ENCODE measurements at regions of chr22 and their contacts with region 1.

Region 1: GRCh38 chr22:35350539-35351503 is 30.1 kb upstream of the HMOX1 start:
- DNase-seq: peak; percentile 93
- ATAC-seq: peak; percentile 95
- H3K4me3 Mint-ChIP-seq: peak overlapping the region; percentile 70
- H3K27ac Mint-ChIP-seq: no peak overlapping the region
- H3K4me1 Mint-ChIP-seq: peaks cover 21% of the 10 kb centered on the region
- H3K27me3 Mint-ChIP-seq: peaks cover 5% of the 10 kb centered on the region

Region 2: DNA sequence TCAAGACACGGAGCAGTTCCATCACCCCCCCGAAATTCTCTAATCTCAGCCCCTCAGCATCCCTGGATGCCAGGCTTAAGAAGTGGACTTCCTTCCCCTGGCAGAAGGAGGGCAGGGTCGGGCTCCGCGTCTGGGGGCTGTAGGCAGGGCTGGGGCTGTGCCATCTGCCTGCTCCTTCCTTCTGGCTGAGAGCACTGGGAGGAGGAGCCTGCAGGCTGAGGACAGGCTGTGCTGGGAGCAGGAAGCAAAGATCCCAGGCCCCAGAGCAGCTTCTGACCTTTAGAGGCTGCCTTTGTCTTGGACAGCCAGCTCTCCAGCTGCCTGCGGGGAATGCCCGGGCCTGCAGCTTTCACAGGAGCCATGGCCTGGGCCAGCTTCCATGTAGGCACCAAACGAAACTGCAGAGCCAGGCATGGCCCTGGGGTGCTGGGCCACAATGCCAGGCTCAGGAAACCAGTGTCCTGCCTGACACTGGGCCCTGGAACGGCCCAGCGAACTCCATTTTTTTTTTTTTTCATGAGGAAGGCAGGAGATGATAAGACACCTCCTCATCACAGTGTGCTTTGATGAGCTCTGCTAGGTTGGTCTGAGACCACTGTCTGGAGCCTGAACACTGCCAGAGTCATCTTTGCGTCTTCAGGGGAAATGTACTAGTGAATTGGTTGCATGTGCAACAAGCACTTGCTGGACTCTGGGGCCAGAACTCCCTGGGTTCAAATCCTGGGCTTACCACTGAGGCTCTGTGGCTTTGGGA is 117.0 kb after region 1 on chr22:
- CTCF ChIA-PET with region 1: no interaction called
- DNase-seq: no peak
- ATAC-seq: no peak
- H3K4me3 Mint-ChIP-seq: no peak overlapping the region
- H3K27ac Mint-ChIP-seq: no peak overlapping the region
- H3K4me1 Mint-ChIP-seq: no peaks in the 10 kb centered on the region
- H3K27me3 Mint-ChIP-seq: no peaks in the 10 kb centered on the region

Region 3: GRCh38 chr22:35582861-35583670 is 232.2 kb after region 1 on chr22:
- CTCF ChIA-PET with region 1: interaction called, 36 read pairs
- DNase-seq: peak; percentile 64
- ATAC-seq: peak; percentile 62
- H3K4me3 Mint-ChIP-seq: no peak overlapping the region
- H3K27ac Mint-ChIP-seq: no peak overlapping the region
- H3K4me1 Mint-ChIP-seq: no peaks in the 10 kb centered on the region
- H3K27me3 Mint-ChIP-seq: no peaks in the 10 kb centered on the region

Region 4: DNA sequence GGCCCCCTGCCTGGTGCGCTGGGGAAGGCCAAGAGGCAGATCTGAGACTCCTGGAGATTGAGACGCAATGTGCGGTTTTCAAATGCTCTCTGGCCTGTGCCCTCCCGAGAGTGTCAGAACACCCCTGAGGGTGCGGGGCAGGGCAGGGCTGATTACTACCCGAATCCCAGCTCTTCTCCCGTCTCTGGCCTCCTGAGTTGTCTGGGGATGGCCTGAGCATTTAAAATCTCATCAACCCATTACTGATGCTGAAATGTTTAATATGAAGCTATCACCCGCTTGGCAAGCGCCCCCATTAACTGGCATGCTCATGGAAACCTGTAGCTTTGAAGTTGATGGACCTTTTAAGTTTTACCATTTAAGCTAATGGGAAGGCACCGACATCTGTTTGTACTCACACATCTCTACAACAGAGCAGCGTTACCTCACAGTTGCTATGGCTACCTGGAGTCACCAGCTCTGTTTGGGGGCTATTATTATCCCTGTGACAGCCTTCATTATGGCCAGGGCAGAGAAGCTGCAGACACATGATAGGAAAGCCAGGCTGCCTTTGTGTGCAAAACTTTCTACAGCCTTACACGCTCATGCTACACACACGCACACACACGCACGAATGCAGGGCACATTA is 269.9 kb after region 1 on chr22:
- CTCF ChIA-PET with region 1: interaction called, 13 read pairs
- DNase-seq: no peak
- ATAC-seq: no peak
- H3K4me3 Mint-ChIP-seq: no peak overlapping the region
- H3K27ac Mint-ChIP-seq: no peak overlapping the region
- H3K4me1 Mint-ChIP-seq: peaks cover 2% of the 10 kb centered on the region
- H3K27me3 Mint-ChIP-seq: peaks cover 12% of the 10 kb centered on the region

Region 5: DNA sequence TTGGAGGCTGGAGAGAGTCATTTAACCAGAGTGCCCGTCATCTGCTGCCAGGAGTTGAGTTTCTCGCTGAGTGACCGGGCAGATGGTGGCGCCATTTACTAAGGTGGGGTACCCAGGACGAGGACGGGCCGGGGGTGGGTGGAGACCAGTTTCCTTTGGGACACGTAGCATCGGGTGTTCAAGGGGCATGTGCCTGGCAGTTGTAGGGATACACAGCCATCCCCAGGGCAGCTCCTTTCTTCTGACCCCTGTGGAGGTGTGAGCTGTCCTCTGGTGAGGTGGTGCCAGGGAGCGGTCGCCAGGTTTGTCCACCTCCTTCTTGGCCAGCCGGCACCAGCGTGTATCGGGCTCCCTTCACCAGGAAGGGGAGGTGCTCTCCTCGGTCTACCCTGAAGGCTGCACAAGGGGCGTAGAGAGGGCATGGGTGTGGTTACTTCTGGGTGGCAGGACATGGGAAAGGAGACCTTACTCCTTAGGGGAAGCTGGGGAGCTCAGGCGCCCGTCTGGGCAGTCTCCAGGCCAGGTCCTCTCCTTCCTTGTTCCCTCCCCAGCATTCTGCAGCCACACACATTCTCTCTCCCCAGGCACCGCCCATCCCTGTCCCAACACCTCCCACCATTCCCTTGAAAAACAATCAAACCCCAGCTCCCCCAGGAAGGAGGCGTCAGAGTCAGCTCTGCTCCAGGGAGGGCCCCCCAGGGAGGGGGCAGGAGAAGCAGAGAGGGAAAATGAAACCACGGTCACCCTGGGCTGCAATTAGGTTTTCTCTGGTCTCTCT is 276.6 kb after region 1 on chr22:
- CTCF ChIA-PET with region 1: interaction called, 14 read pairs
- DNase-seq: peak; percentile 80
- ATAC-seq: peak; percentile 67
- H3K4me3 Mint-ChIP-seq: peak overlapping the region; percentile 76
- H3K27ac Mint-ChIP-seq: peak overlapping the region; percentile 61
- H3K4me1 Mint-ChIP-seq: peaks cover 28% of the 10 kb centered on the region
- H3K27me3 Mint-ChIP-seq: peaks cover 17% of the 10 kb centered on the region

Measured in activated CD8-positive, alpha-beta memory T cell treated with anti-CD3 and anti-CD28 coated beads, Interleukin-2, amount 10 ng/mL, durations not matched to agents 7 days and 5 days (primary cell).